Lower leg skin (tissue), 4 donors: ENCODE measurements at regions of chr2 and their contacts with region 1.

Region 1: DNA sequence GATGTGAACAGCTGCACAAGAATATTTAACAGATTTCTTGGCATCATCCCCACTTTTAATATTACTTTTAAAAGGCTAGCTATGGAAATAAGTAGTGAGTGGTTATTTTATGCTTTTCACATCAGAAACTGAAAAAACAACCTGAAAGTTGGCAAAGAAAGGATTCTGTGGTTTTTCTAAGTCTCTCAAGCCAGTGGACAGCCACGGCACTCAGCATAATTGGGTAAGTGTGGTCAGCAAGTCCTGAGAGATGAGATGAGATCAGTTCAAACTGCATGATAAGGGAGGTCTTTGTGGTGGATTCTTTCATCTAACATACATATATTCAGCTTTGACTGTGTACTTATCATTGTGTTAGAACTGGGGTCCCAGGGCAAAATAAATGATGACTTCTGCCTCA is 105.2 kb downstream of the LYPD6B start:
- DNase-seq: no peak
- H3K4me3 ChIP-seq: no peak overlapping the region
- CTCF ChIP-seq: no peak
- POLR2A ChIP-seq: no peak

Region 2: GRCh38 chr2:149213764-149214493 is 70.2 kb after region 1 on chr2:
- intact Hi-C with region 1: loop called (anchors 2 kb)
- DNase-seq: no peak
- H3K4me3 ChIP-seq: no peak overlapping the region
- CTCF ChIP-seq: no peak
- POLR2A ChIP-seq: no peak

Region 3: GRCh38 chr2:149360106-149360505 is 216.4 kb after region 1 on chr2:
- intact Hi-C with region 1: no loop called
- DNase-seq: no peak
- H3K4me3 ChIP-seq: no peak overlapping the region
- CTCF ChIP-seq: no peak
- POLR2A ChIP-seq: no peak